MCF 10A (cell line): ENCODE measurements at regions of chr2 and their contacts with region 1.

Region 1: DNA sequence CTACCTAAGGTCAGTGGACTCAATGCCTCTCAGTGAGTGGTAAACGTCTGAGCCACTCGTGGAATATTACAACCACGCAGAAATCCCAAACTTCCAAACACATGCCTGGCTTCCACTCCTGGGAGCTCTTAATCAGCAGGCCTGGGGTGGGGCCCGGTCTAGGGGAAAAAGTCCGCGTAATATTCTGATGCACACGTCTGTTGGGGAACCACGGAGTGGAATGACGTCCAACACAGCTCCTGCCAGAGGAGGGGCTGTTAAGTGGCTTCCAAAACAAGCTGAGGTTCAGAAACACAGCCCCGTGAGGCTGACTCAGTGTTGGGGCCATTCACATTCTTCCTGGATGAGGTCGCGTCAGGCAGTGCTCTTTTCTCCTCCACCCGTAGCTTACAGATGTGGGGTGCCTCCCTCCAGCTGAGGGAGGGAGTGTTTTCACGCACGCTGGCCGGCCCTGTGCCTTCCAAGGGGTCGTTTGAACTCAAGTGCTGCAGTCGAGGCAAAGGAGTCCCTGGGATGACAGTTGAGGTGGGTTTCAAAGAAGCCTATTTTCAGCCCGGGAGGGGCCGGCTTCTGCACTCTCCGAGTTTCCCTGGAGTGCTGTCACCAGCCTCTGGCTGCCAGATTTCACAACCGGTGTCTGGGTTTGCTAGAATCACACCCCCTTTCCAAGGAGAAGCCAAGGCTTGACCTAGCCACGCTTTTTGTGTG is 73.1 kb downstream of the ACKR3 start:
- DNase-seq: peak; percentile 85
- H3K4me3 Mint-ChIP-seq: peak overlapping the region; percentile 52
- H3K27ac Mint-ChIP-seq: peak overlapping the region; percentile 91
- H3K4me1 Mint-ChIP-seq: peaks cover 23% of the 10 kb centered on the region
- H3K27me3 Mint-ChIP-seq: no peaks in the 10 kb centered on the region
- CTCF ChIP-seq: no peak

Region 2: DNA sequence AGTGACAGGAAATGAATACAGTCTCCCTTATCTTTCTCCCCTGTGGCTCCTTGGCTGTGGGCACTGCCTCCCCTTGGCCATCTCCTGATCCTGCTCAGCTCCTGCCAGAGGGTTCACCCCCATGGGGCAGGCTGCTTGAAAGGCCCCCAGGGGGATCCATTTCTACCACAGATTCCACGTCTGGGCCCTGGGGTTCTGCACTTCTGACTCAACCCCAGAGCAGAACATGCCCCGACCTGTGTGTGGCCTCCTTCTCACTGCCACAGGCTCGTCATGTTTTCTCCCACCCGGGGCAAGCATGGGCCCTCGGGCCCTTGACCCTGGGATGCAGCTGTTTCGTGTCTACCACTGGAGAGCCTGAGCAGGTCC is 49.0 kb after region 1 on chr2:
- CTCF ChIA-PET with region 1: no interaction called
- POLR2A ChIA-PET with region 1: interaction called, 8 read pairs
- intact Hi-C with region 1: loop called (anchors 5 kb)
- DNase-seq: peak; percentile 41
- H3K4me3 Mint-ChIP-seq: no peak overlapping the region
- H3K27ac Mint-ChIP-seq: peak overlapping the region; percentile 69
- H3K4me1 Mint-ChIP-seq: peaks cover 48% of the 10 kb centered on the region
- H3K27me3 Mint-ChIP-seq: no peaks in the 10 kb centered on the region
- CTCF ChIP-seq: no peak

Region 3: GRCh38 chr2:236745420-236746197 is 102.9 kb after region 1 on chr2:
- CTCF ChIA-PET with region 1: no interaction called
- POLR2A ChIA-PET with region 1: interaction called, 12 read pairs
- intact Hi-C with region 1: loop called (anchors 2 kb)
- DNase-seq: peak; percentile 87
- H3K4me3 Mint-ChIP-seq: peak overlapping the region; percentile 17
- H3K27ac Mint-ChIP-seq: peak overlapping the region; percentile 74
- H3K4me1 Mint-ChIP-seq: peaks cover 57% of the 10 kb centered on the region
- H3K27me3 Mint-ChIP-seq: no peaks in the 10 kb centered on the region
- CTCF ChIP-seq: no peak

Region 4: GRCh38 chr2:236769921-236770671 is 127.4 kb after region 1 on chr2:
- CTCF ChIA-PET with region 1: no interaction called
- POLR2A ChIA-PET with region 1: interaction called, 10 read pairs
- intact Hi-C with region 1: loop called (anchors 1 kb)
- DNase-seq: peak; percentile 93
- H3K4me3 Mint-ChIP-seq: peak overlapping the region; percentile 40
- H3K27ac Mint-ChIP-seq: peak overlapping the region; percentile 92
- H3K4me1 Mint-ChIP-seq: peaks cover 22% of the 10 kb centered on the region
- H3K27me3 Mint-ChIP-seq: no peaks in the 10 kb centered on the region
- CTCF ChIP-seq: no peak

Region 5: DNA sequence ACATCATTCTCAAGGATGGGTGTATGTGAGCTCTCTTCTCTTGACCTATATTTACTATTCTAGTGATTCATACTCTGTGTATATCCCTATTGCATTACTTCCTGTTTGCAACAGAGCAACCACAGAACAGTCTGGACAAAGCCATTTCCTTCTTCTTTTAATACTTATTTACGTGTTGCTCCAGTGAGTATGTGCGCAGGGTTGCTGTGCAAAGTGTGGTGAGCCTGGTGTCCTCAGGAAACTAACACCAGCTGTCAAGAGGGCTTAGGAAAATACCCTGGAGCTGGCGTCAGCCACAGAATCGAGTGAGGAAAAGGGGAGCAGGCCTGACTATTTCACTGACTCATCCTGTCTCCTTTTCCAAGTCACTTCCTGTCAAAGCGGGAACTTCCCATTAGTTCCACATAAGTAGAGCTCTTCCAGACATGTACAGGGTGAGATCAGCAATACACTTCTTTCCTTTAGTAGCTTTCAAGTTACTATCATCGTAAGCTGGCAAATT is 228.8 kb after region 1 on chr2:
- CTCF ChIA-PET with region 1: no interaction called
- POLR2A ChIA-PET with region 1: interaction called, 4 read pairs
- intact Hi-C with region 1: loop called (anchors 2 kb)
- DNase-seq: peak; percentile 94
- H3K4me3 Mint-ChIP-seq: peak overlapping the region; percentile 22
- H3K27ac Mint-ChIP-seq: peak overlapping the region; percentile 97
- H3K4me1 Mint-ChIP-seq: peaks cover 19% of the 10 kb centered on the region
- H3K27me3 Mint-ChIP-seq: no peaks in the 10 kb centered on the region
- CTCF ChIP-seq: no peak

Region 6: DNA sequence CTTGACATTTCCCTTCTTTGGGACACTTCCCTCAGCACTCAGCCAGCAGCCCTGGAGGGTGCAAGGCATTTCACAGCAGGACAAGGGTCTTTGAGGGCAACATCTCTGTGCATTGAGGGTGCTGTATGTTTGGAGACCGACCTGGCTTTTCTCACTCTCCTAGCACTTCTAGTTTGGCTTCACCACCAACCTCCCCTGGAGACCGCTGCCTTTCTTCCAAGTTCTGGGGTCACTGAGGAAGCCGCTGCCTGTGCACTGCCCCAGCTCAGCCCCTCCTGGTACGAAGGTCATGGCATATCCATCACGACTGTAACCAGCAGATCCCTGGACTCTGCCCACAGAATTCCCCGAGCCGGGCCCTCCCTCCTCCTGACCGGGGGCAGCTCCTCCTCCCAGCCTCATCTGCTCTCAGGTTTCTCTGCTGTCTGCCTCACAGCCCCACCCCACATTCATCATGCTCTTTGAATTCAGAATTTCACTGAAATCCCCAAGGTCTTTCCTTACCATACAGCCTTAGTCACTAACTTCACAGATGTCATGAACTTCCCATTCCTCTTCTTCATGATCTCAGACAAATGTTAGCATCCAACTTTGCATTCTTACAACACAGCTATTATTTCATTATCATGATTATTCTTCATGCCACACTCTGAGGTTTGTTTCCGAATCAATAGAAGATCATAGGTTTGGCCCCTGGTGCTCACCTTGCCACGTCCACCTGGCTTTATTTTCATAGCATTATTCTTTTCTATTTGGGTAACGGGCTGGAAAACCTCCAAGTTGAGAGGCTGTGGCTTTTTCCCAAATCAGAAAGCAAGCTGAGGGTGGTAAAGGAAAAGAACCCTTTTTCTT is 330.0 kb after region 1 on chr2:
- CTCF ChIA-PET with region 1: no interaction called
- POLR2A ChIA-PET with region 1: interaction called, 4 read pairs
- intact Hi-C with region 1: loop called (anchors 2 kb)
- DNase-seq: peak; percentile 72
- H3K4me3 Mint-ChIP-seq: no peak overlapping the region
- H3K27ac Mint-ChIP-seq: no peak overlapping the region
- H3K4me1 Mint-ChIP-seq: peaks cover 9% of the 10 kb centered on the region
- H3K27me3 Mint-ChIP-seq: no peaks in the 10 kb centered on the region
- CTCF ChIP-seq: no peak

Region 7: GRCh38 chr2:237026981-237027711 is 384.4 kb after region 1 on chr2:
- CTCF ChIA-PET with region 1: no interaction called
- POLR2A ChIA-PET with region 1: no interaction called
- intact Hi-C with region 1: loop called (anchors 2 kb)
- DNase-seq: peak; percentile 74
- H3K4me3 Mint-ChIP-seq: no peak overlapping the region
- H3K27ac Mint-ChIP-seq: no peak overlapping the region
- H3K4me1 Mint-ChIP-seq: no peaks in the 10 kb centered on the region
- H3K27me3 Mint-ChIP-seq: no peaks in the 10 kb centered on the region
- CTCF ChIP-seq: peak; percentile 88